Activated CD8-positive, alpha-beta T cell treated with anti-CD3 and anti-CD28 coated beads, Interleukin-2, amount 10 ng/mL, durations not matched to agents 7 days and 5 days (primary cell): ENCODE measurements at regions of chr11 and their contacts with region 1.

Region 1: GRCh38 chr11:112795142-112795815 is 165.9 kb upstream of the NCAM1 start:
- DNase-seq: peak; percentile 45
- ATAC-seq: peak; percentile 63
- H3K4me3 Mint-ChIP-seq: no peak overlapping the region
- H3K27ac Mint-ChIP-seq: no peak overlapping the region
- H3K4me1 Mint-ChIP-seq: peaks cover 14% of the 10 kb centered on the region
- H3K27me3 Mint-ChIP-seq: peaks cover 1% of the 10 kb centered on the region

Region 2: GRCh38 chr11:112588252-112588694 is 207.0 kb before region 1 on chr11:
- CTCF ChIA-PET with region 1: interaction called, 17 read pairs
- POLR2A ChIA-PET with region 1: interaction called, 3 read pairs
- DNase-seq: peak; percentile 56
- ATAC-seq: peak; percentile 90
- H3K4me3 Mint-ChIP-seq: no peak overlapping the region
- H3K27ac Mint-ChIP-seq: no peak overlapping the region
- H3K4me1 Mint-ChIP-seq: no peaks in the 10 kb centered on the region
- H3K27me3 Mint-ChIP-seq: peaks cover 15% of the 10 kb centered on the region

Region 3: GRCh38 chr11:112922606-112923005 is 127.3 kb after region 1 on chr11:
- CTCF ChIA-PET with region 1: no interaction called
- POLR2A ChIA-PET with region 1: no interaction called
- DNase-seq: no peak
- ATAC-seq: no peak
- H3K4me3 Mint-ChIP-seq: no peak overlapping the region
- H3K27ac Mint-ChIP-seq: no peak overlapping the region
- H3K4me1 Mint-ChIP-seq: no peaks in the 10 kb centered on the region
- H3K27me3 Mint-ChIP-seq: peaks cover 11% of the 10 kb centered on the region